ENCODE measurements at regions of chr2 and their contacts with region 1.

Region 1: DNA sequence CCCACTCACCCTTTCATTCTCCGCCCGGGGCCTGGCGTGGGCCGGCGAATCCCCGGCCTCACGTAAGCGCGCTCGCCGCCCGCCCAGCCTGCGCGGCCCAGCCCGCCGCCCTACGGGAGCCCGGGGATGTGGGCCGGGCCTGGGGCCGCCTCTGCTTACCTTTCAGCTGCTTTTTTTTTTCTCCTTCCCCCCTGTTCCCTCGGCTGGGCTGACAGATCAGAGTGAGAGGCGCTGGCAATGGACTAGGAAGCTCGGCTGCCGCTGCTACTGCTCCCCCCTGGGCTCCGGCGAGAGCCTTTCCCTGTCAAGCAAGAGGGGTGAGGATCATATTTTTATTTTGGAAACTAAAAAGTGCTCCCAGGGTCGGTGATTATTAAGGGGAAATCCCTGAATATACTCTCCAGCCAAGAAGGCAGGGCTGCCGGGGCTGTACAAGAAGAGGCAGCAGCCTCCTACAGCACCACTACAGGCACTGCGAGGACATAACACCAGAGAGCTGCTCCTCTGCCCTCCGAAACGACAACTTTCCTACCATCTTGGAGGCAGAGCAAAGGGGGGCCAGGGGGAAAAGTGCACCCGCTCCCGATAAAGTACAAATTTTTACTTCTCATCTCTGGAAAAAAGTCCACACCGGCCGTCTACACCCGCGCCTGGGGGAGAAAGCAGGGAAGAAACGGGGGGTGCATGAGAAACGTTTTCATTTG is at the start of gene INO80D:
- DNase-seq: peak; percentile 88
- H3K4me3 ChIP-seq: peak within 1 kb of the TSS; percentile 86 to 96 (median 92)
- H3K27ac ChIP-seq: peak within 1 kb of the TSS; percentile 82
- H3K4me1 ChIP-seq: peaks cover 16% of the 10 kb centered on the region
- H3K27me3 ChIP-seq: no peaks in the 10 kb centered on the region
- CTCF ChIP-seq: peak; percentile 40 to 58
- POLR2A ChIP-seq: no peak
- total RNA-seq, gene INO80D: 19.3 and 20.3 TPM in 2 replicates

Region 2: GRCh38 chr2:205915130-205915524 is 170.8 kb before region 1 on chr2:
- CTCF ChIA-PET with region 1: no interaction called
- POLR2A ChIA-PET with region 1: no interaction called
- dilution Hi-C with region 1: no loop called
- intact Hi-C with region 1: no loop called
- DNase-seq: no peak
- H3K4me3 ChIP-seq: no peak overlapping the region
- H3K27ac ChIP-seq: no peak overlapping the region
- H3K4me1 ChIP-seq: no peaks in the 10 kb centered on the region
- H3K27me3 ChIP-seq: peaks cover 20 to 21% of the 10 kb centered on the region in 2 experiments
- CTCF ChIP-seq: no peak
- POLR2A ChIP-seq: no peak

Region 3: GRCh38 chr2:206112108-206112507 is 26.2 kb after region 1 on chr2:
- CTCF ChIA-PET with region 1: no interaction called
- POLR2A ChIA-PET with region 1: no interaction called
- dilution Hi-C with region 1: no loop called
- intact Hi-C with region 1: loop called (anchors 2 kb)
- DNase-seq: no peak
- H3K4me3 ChIP-seq: no peak overlapping the region
- H3K27ac ChIP-seq: no peak overlapping the region
- H3K4me1 ChIP-seq: no peaks in the 10 kb centered on the region
- H3K27me3 ChIP-seq: no peaks in the 10 kb centered on the region
- CTCF ChIP-seq: no peak
- POLR2A ChIP-seq: no peak

Region 4: GRCh38 chr2:206127656-206128055 is 41.8 kb after region 1 on chr2:
- CTCF ChIA-PET with region 1: interaction called, 3 read pairs
- POLR2A ChIA-PET with region 1: no interaction called
- dilution Hi-C with region 1: no loop called
- intact Hi-C with region 1: loop called (anchors 2 kb)
- DNase-seq: no peak
- H3K4me3 ChIP-seq: no peak overlapping the region
- H3K27ac ChIP-seq: no peak overlapping the region
- H3K4me1 ChIP-seq: no peaks in the 10 kb centered on the region
- H3K27me3 ChIP-seq: no peaks in the 10 kb centered on the region
- CTCF ChIP-seq: no peak
- POLR2A ChIP-seq: no peak

Region 5: DNA sequence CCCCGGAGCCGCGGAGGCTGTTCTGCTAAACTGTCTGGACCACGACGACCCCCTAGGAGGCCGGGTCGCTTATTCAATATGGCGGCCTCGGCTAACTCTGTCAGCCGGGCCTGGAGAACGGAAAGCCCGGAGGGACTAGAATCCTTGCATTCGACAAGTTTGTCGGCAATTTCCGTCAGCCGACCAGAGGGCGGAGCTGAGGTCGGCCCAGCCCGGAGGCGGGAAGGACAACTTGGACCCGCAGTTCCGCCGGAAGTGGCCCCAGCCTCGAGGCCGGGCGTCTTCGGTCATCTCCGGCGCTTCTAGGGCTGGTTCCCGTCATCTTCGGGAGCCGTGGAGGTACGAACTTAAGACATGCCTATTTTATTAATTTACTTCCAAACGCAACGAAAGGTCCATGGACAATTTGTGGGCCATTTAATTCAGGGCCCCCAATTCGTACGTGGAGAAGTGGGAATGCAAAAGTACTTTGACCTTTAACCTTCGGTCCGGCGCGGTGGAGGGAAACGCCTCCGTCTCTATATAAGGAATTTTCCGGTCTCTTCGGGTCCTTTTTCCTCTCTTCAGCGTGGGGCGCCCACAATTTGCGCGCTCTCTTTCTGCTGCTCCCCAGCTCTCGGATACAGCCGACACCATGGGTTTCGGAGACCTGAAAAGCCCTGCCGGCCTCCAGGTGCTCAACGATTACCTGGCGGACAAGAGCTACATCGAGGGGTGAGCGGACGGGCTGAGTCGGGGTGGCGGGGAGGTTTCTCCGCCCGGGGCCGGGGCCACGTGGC is 73.6 kb after region 1 on chr2 and contains the starts of genes EEF1B2 and NDUFS1:
- CTCF ChIA-PET with region 1: interaction called, 3 read pairs
- POLR2A ChIA-PET with region 1: no interaction called
- dilution Hi-C with region 1: no loop called
- intact Hi-C with region 1: loop called (anchors 1 kb)
- DNase-seq: peak; percentile 99
- H3K4me3 ChIP-seq: peak within 1 kb of the TSS; percentile 72 to 97 (median 96)
- H3K27ac ChIP-seq: peak within 1 kb of the TSS; percentile 67
- H3K4me1 ChIP-seq: peaks cover 27% of the 10 kb centered on the region
- H3K27me3 ChIP-seq: no peaks in the 10 kb centered on the region
- CTCF ChIP-seq: no peak
- POLR2A ChIP-seq: peak; percentile 89
- total RNA-seq, gene EEF1B2: 558 and 576 TPM in 2 replicates
- total RNA-seq, gene NDUFS1: 93.2 and 95.5 TPM in 2 replicates

Region 6: GRCh38 chr2:207037896-207038295 is 952.0 kb after region 1 on chr2:
- CTCF ChIA-PET with region 1: no interaction called
- POLR2A ChIA-PET with region 1: no interaction called
- dilution Hi-C with region 1: no loop called
- intact Hi-C with region 1: loop called (anchors 5 kb)
- DNase-seq: no peak
- H3K4me3 ChIP-seq: no peak overlapping the region
- H3K27ac ChIP-seq: no peak overlapping the region
- H3K4me1 ChIP-seq: peaks cover 9% of the 10 kb centered on the region
- H3K27me3 ChIP-seq: no peaks in the 10 kb centered on the region
- CTCF ChIP-seq: no peak
- POLR2A ChIP-seq: no peak

Measured in endothelial cell of umbilical vein (primary cell).